Mammary epithelial cell (primary cell): ENCODE measurements at regions of chr13 and their contacts with region 1.

Region 1: DNA sequence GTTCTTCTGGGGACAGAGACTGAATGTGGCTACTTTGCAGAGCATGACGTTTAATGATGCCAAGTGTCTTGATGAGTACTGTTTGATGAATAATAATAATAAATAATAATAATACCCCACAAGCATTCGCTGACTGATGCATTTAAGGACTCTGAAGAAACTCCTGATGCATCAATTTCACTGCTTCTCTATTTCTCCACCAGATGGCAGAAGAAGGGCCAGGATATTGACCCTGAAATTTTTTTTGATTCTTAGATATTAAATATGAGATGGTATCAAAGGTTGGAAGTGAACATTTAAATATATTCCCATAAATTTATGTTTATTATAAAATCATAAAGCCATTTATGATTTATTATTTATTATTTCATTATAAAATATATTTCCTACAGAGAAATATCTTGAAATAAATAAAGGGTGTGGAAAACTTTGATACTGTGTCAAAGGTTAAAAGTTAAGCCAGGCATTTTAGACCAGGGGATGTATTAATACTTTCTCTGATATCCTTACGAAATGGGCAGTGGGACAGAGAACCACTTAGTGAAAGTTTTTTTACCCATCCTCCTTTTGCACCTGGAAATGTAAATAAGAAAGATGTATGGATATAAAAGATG is 170.9 kb downstream of the LACC1 start:
- DNase-seq: peak; percentile 20
- H3K4me3 ChIP-seq: no peak overlapping the region
- H3K27ac ChIP-seq: no peak overlapping the region
- H3K4me1 ChIP-seq: peaks cover 5% of the 10 kb centered on the region
- H3K27me3 ChIP-seq: no peaks in the 10 kb centered on the region
- CTCF ChIP-seq: peak; percentile 66 to 77

Region 2: GRCh38 chr13:43915451-43915850 is 135.1 kb before region 1 on chr13:
- CTCF ChIA-PET with region 1: no interaction called
- dilution Hi-C with region 1: no loop called
- in situ Hi-C with region 1: loop called (anchors 10 kb)
- intact Hi-C with region 1: no loop called
- DNase-seq: no peak
- H3K4me3 ChIP-seq: no peak overlapping the region
- H3K27ac ChIP-seq: no peak overlapping the region
- H3K4me1 ChIP-seq: peaks cover 6% of the 10 kb centered on the region
- H3K27me3 ChIP-seq: no peaks in the 10 kb centered on the region
- CTCF ChIP-seq: no peak

Region 3: DNA sequence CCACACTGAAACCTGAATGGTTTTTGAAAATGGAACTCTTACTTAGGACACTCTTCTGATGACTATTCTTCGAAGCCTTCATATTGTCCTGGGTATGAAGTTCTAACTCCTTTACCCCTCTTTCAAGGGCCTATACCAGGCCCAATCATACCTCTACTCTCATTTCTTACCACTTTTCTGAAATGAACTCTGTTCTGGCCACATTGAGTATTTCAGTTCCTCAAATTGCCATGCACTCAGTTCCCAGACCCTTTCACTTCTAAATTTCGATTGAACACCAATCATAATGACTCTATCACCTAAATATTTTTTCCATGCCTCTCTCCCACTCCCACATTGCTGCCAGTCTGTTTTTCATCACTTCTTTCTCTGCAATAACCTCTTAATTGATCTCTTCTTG is 117.2 kb before region 1 on chr13:
- CTCF ChIA-PET with region 1: no interaction called
- dilution Hi-C with region 1: no loop called
- in situ Hi-C with region 1: no loop called
- intact Hi-C with region 1: no loop called
- DNase-seq: no peak
- H3K4me3 ChIP-seq: no peak overlapping the region
- H3K27ac ChIP-seq: no peak overlapping the region
- H3K4me1 ChIP-seq: no peaks in the 10 kb centered on the region
- H3K27me3 ChIP-seq: no peaks in the 10 kb centered on the region
- CTCF ChIP-seq: no peak

Region 4: GRCh38 chr13:44243198-44243857 is 192.8 kb after region 1 on chr13:
- CTCF ChIA-PET with region 1: no interaction called
- dilution Hi-C with region 1: no loop called
- in situ Hi-C with region 1: loop called in 1 of 2 experiments (anchors 25 kb)
- intact Hi-C with region 1: loop called (anchors 5 kb)
- DNase-seq: peak; percentile 78
- H3K4me3 ChIP-seq: no peak overlapping the region
- H3K27ac ChIP-seq: no peak overlapping the region
- H3K4me1 ChIP-seq: peaks cover 2% of the 10 kb centered on the region
- H3K27me3 ChIP-seq: no peaks in the 10 kb centered on the region
- CTCF ChIP-seq: no peak

Region 5: DNA sequence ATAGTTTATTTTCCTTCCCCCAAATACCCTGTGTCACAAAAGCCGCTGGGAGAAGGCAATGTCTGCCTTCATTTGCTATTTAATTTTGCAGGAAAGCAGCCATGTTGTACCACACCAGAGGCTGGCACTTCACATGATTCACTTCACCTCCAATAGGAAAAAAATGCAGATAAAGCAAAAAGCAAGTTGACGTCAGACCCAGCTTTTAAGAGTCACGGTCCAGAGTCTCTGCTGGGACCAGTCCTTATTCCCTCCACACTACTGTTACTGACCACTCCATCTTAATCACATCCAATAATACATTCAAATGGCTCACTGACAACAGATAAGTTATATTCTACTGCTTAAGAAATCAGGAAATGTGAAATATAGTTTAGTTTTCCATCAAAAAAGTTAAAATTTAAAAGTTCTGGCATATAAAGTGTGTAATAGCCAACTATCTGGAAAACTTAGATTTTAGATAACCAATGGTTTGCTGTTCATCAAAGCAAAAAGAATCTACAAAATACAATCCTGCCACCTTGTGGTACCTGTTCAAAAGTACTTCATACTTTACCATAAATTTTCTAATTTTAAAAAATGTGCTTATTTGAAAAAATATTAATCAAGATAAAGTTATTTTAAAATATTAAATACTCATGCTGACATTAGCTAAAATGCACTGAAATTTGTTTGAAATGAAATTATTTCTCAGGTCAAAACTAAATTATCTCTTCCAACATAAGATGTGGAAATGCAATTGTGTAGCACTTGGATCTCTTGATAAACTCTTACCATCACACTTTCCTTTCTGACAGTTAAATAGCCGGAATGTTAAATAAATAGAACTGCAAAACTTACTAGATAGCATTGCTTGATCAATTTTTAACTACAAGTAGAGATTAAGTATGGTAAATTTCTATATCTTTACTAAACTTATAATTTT is 420.3 kb after region 1 on chr13:
- CTCF ChIA-PET with region 1: no interaction called
- dilution Hi-C with region 1: no loop called
- in situ Hi-C with region 1: no loop called
- intact Hi-C with region 1: loop called (anchors 1 kb)
- DNase-seq: no peak
- H3K4me3 ChIP-seq: no peak overlapping the region
- H3K27ac ChIP-seq: no peak overlapping the region
- H3K4me1 ChIP-seq: peaks cover 3% of the 10 kb centered on the region
- H3K27me3 ChIP-seq: no peaks in the 10 kb centered on the region
- CTCF ChIP-seq: peak; percentile 51 to 52